B cell (primary cell): ENCODE measurements at regions of chr11 and their contacts with region 1.

Region 1: DNA sequence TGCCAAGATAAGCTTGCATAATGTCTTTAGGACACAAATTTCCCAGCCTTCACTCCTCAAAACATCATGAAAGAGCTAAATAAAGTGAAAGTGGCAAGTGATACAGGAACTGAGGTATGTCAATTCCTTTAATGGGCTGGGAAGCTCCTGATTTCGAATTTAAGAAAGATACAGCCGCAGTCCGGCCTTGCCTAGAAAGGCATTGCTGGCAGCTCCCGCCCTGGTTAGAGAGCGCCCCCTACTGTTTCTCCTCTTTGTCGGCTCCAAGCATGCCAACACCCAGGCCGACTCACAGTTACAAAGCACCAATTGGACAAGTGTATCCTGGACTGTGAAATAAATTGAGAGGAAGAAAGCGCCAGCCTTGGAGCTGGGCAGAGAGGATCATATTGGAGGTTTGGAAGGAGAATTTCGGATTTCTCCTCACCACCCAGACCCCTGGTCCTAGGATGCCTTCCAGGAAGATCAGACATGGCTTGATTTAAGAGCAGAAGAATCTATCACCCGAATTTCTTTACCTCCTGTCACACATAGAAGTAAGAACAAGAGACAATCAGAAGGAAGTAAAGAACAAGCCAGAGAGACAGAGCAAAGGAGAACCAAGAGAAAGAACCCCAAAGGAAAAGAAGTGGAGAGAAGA is 84.0 kb downstream of the FAM76B start:
- DNase-seq: peak; percentile 91
- ATAC-seq: peak; percentile 90
- H3K4me3 ChIP-seq: no peak overlapping the region
- H3K4me3 Mint-ChIP-seq: no peak overlapping the region
- H3K27ac ChIP-seq: peak overlapping the region; percentile 14 to 68
- H3K27ac Mint-ChIP-seq: no peak overlapping the region
- H3K4me1 ChIP-seq: peaks cover 28 to 30% of the 10 kb centered on the region in 2 donors
- H3K4me1 Mint-ChIP-seq: peaks cover 27% of the 10 kb centered on the region
- H3K27me3 ChIP-seq: no peaks in the 10 kb centered on the region
- H3K27me3 Mint-ChIP-seq: no peaks in the 10 kb centered on the region
- CTCF ChIP-seq: peak; percentile 91

Region 2: GRCh38 chr11:95150946-95151684 is 554.5 kb before region 1 on chr11:
- CTCF ChIA-PET with region 1: interaction called, 169 read pairs
- POLR2A ChIA-PET with region 1: interaction called, 3 read pairs
- intact Hi-C with region 1: loop called (anchors 1 kb)
- DNase-seq: peak; percentile 96
- ATAC-seq: peak; percentile 90
- H3K4me3 ChIP-seq: peak overlapping the region; percentile 52 to 91 (median 82)
- H3K4me3 Mint-ChIP-seq: peak overlapping the region; percentile 95
- H3K27ac ChIP-seq: peak overlapping the region; percentile 88 to 91
- H3K27ac Mint-ChIP-seq: peak overlapping the region; percentile 96
- H3K4me1 ChIP-seq: peaks cover 28 to 43% of the 10 kb centered on the region in 2 donors
- H3K4me1 Mint-ChIP-seq: peaks cover 46% of the 10 kb centered on the region
- H3K27me3 ChIP-seq: no peaks in the 10 kb centered on the region
- H3K27me3 Mint-ChIP-seq: no peaks in the 10 kb centered on the region
- CTCF ChIP-seq: peak; percentile 86

Region 3: GRCh38 chr11:95193541-95193940 is 512.1 kb before region 1 on chr11:
- CTCF ChIA-PET with region 1: interaction called, 31 read pairs
- POLR2A ChIA-PET with region 1: interaction called, 3 read pairs
- intact Hi-C with region 1: no loop called
- DNase-seq: no peak
- ATAC-seq: no peak
- H3K4me3 ChIP-seq: no peak overlapping the region
- H3K4me3 Mint-ChIP-seq: no peak overlapping the region
- H3K27ac ChIP-seq: no peak overlapping the region
- H3K27ac Mint-ChIP-seq: no peak overlapping the region
- H3K4me1 ChIP-seq: peaks cover 10 to 18% of the 10 kb centered on the region in 2 donors
- H3K4me1 Mint-ChIP-seq: peaks cover 42% of the 10 kb centered on the region
- H3K27me3 ChIP-seq: no peaks in the 10 kb centered on the region
- H3K27me3 Mint-ChIP-seq: no peaks in the 10 kb centered on the region
- CTCF ChIP-seq: no peak

Region 4: DNA sequence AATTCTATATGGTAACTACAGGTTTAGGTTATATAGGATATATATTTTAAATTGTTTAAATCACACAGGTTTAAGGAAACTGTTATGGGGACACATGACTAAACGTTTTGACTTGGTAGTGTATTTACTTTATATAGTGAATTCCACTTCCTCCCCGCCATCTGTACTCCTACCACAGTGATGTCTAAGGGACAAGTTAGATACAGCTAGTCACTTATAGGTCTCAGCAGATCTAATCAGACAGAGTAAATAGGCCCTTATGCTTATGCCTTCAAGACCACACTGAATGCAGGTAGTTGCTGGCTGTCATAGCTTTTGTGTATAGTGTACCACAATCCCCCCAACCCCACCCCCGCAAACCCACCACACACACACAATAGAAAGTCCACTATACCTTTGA is 482.8 kb before region 1 on chr11:
- CTCF ChIA-PET with region 1: interaction called, 17 read pairs
- POLR2A ChIA-PET with region 1: no interaction called
- intact Hi-C with region 1: no loop called
- DNase-seq: no peak
- ATAC-seq: peak; percentile 47
- H3K4me3 ChIP-seq: no peak overlapping the region
- H3K4me3 Mint-ChIP-seq: peak overlapping the region; percentile 40
- H3K27ac ChIP-seq: peak overlapping the region in 1 of 2 donors; percentile 59
- H3K27ac Mint-ChIP-seq: peak overlapping the region; percentile 4
- H3K4me1 ChIP-seq: peaks cover 10 to 14% of the 10 kb centered on the region in 2 donors
- H3K4me1 Mint-ChIP-seq: peaks cover 55% of the 10 kb centered on the region
- H3K27me3 ChIP-seq: no peaks in the 10 kb centered on the region
- H3K27me3 Mint-ChIP-seq: no peaks in the 10 kb centered on the region
- CTCF ChIP-seq: no peak

Region 5: GRCh38 chr11:95296621-95297025 is 409.0 kb before region 1 on chr11:
- CTCF ChIA-PET with region 1: interaction called, 16 read pairs
- POLR2A ChIA-PET with region 1: interaction called, 5 read pairs
- intact Hi-C with region 1: no loop called
- DNase-seq: peak; percentile 84
- ATAC-seq: peak; percentile 90
- H3K4me3 ChIP-seq: peak overlapping the region in 4 of 5 experiments; percentile 10 to 53 (median 26)
- H3K4me3 Mint-ChIP-seq: peak overlapping the region; percentile 82
- H3K27ac ChIP-seq: peak overlapping the region; percentile 81 to 82
- H3K27ac Mint-ChIP-seq: peak overlapping the region; percentile 95
- H3K4me1 ChIP-seq: peaks cover 44 to 47% of the 10 kb centered on the region in 2 donors
- H3K4me1 Mint-ChIP-seq: peaks cover 48% of the 10 kb centered on the region
- H3K27me3 ChIP-seq: no peaks in the 10 kb centered on the region
- H3K27me3 Mint-ChIP-seq: no peaks in the 10 kb centered on the region
- CTCF ChIP-seq: peak; percentile 9

Region 6: GRCh38 chr11:95545116-95545875 is 160.3 kb before region 1 on chr11:
- CTCF ChIA-PET with region 1: interaction called, 10 read pairs
- POLR2A ChIA-PET with region 1: no interaction called
- intact Hi-C with region 1: no loop called
- DNase-seq: no peak
- ATAC-seq: no peak
- H3K4me3 ChIP-seq: no peak overlapping the region
- H3K4me3 Mint-ChIP-seq: no peak overlapping the region
- H3K27ac ChIP-seq: no peak overlapping the region
- H3K27ac Mint-ChIP-seq: no peak overlapping the region
- H3K4me1 ChIP-seq: no peaks in the 10 kb centered on the region
- H3K4me1 Mint-ChIP-seq: no peaks in the 10 kb centered on the region
- H3K27me3 ChIP-seq: no peaks in the 10 kb centered on the region
- H3K27me3 Mint-ChIP-seq: no peaks in the 10 kb centered on the region
- CTCF ChIP-seq: no peak

Region 7: DNA sequence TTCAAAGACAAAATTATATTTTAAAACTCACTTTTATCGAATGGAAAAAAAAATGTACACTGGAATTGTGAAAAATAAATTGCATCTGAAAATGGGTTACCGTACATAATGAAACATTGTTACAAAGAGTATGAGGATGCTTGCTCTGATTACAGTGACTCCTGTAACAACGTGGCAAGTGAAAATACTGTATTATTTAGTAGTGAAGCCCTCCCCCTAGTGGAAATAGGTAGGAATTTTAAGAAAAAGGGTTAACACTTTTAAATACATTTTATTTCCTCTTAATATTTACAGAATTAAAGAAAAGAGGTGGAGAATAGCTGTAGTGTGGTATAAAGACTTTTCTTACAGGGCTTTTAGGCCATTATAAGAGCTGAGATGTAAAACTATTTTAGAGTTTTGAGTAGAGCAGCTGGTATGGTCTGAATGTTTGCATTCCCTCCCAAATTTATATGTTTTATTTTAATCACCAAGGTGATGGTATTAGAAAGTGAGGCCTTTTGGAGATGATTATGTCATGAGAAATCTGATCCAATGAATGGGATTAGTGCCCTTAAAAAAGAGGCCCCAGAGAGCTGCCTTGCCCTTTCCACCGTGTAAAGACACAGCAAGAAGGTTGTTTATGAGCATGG is 58.8 kb after region 1 on chr11:
- CTCF ChIA-PET with region 1: interaction called, 135 read pairs
- POLR2A ChIA-PET with region 1: no interaction called
- intact Hi-C with region 1: loop called (anchors 2 kb)
- DNase-seq: peak; percentile 78
- ATAC-seq: peak; percentile 92
- H3K4me3 ChIP-seq: no peak overlapping the region
- H3K4me3 Mint-ChIP-seq: no peak overlapping the region
- H3K27ac ChIP-seq: no peak overlapping the region
- H3K27ac Mint-ChIP-seq: no peak overlapping the region
- H3K4me1 ChIP-seq: peaks cover 7% of the 10 kb centered on the region in 2 donors
- H3K4me1 Mint-ChIP-seq: peaks cover 24% of the 10 kb centered on the region
- H3K27me3 ChIP-seq: no peaks in the 10 kb centered on the region
- H3K27me3 Mint-ChIP-seq: no peaks in the 10 kb centered on the region
- CTCF ChIP-seq: peak; percentile 92